CD8-positive, alpha-beta T cell (primary cell): ENCODE measurements at regions of chr2 and their contacts with region 1.

Region 1: DNA sequence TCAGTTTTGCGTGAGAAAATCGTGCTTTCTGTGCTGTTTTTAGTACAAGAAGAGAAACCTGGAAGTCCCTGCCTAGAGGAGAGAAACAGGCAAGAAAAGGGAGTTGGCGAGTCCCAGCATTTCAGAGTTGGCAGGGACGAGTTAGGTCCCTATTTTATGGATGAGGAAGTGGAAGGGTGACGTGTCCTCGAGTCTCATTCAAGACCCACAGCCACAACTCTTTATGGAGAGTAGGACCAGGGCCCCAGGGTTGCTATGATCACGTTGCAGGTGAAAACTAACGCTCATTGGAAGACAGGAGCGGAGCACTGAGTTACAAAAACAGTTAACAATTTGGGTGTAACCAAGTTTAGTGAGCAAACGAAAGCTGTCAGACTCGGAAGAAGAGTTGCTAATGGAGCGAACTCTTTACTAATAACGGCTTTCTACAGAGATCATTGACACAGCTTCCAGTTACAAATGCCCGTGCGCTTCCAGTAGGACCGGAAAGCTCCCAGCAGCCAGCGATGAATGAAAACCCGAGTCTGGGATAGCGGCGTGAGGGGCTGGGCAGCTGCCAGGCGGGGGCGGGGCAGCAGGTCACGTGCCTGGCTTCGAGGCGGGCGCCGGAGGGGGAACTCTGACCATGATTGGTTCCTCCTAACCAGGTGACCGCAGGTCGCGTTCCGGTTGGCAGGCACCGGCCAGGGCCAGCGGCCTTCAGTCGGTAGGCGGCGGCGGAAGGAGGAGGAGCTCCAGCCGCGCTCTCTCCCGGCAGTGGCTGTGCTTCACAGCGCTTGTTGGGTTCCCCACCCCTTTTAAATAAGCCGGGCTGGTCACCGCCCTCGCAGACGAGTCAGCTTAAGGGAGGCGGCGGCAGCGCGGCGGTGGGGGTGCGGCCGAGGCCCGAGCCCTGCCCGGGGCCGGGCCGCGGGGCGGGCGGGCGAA is at the start of gene CCNYL1:
- DNase-seq: peak; percentile 95 to 99 (median 97)
- ATAC-seq: peak; percentile 96
- H3K4me3 ChIP-seq: peak within 1 kb of the TSS; percentile 87 to 97
- H3K4me3 Mint-ChIP-seq: peak within 1 kb of the TSS; percentile 91
- H3K27ac ChIP-seq: peak within 1 kb of the TSS; percentile 69 to 71
- H3K27ac Mint-ChIP-seq: peak within 1 kb of the TSS; percentile 86
- H3K4me1 ChIP-seq: peaks cover 19% of the 10 kb centered on the region
- H3K4me1 Mint-ChIP-seq: peaks cover 22% of the 10 kb centered on the region
- H3K27me3 ChIP-seq: no peaks in the 10 kb centered on the region
- H3K27me3 Mint-ChIP-seq: no peaks in the 10 kb centered on the region
- CTCF ChIP-seq: no peak
- total RNA-seq, gene CCNYL1: 12.0 to 12.3 TPM

Region 2: DNA sequence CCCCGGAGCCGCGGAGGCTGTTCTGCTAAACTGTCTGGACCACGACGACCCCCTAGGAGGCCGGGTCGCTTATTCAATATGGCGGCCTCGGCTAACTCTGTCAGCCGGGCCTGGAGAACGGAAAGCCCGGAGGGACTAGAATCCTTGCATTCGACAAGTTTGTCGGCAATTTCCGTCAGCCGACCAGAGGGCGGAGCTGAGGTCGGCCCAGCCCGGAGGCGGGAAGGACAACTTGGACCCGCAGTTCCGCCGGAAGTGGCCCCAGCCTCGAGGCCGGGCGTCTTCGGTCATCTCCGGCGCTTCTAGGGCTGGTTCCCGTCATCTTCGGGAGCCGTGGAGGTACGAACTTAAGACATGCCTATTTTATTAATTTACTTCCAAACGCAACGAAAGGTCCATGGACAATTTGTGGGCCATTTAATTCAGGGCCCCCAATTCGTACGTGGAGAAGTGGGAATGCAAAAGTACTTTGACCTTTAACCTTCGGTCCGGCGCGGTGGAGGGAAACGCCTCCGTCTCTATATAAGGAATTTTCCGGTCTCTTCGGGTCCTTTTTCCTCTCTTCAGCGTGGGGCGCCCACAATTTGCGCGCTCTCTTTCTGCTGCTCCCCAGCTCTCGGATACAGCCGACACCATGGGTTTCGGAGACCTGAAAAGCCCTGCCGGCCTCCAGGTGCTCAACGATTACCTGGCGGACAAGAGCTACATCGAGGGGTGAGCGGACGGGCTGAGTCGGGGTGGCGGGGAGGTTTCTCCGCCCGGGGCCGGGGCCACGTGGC is 1551.5 kb before region 1 on chr2 and contains the starts of genes EEF1B2 and NDUFS1:
- CTCF ChIA-PET with region 1: no interaction called
- POLR2A ChIA-PET with region 1: no interaction called
- intact Hi-C with region 1: loop called in 1 of 2 experiments (anchors 5 kb)
- DNase-seq: peak; percentile 95 to 99 (median 96)
- ATAC-seq: peak; percentile 85
- H3K4me3 ChIP-seq: peak within 1 kb of the TSS; percentile 73 to 93
- H3K4me3 Mint-ChIP-seq: peak within 1 kb of the TSS; percentile 99
- H3K27ac ChIP-seq: peak within 1 kb of the TSS; percentile 81 to 91
- H3K27ac Mint-ChIP-seq: peak within 1 kb of the TSS; percentile 100
- H3K4me1 ChIP-seq: peaks cover 30% of the 10 kb centered on the region
- H3K4me1 Mint-ChIP-seq: peaks cover 59% of the 10 kb centered on the region
- H3K27me3 ChIP-seq: no peaks in the 10 kb centered on the region
- H3K27me3 Mint-ChIP-seq: no peaks in the 10 kb centered on the region
- CTCF ChIP-seq: no peak
- total RNA-seq, gene EEF1B2: 1,147 to 1,208 TPM
- total RNA-seq, gene NDUFS1: 23.7 to 28.7 TPM

Region 3: GRCh38 chr2:207123335-207123744 is 587.7 kb before region 1 on chr2:
- CTCF ChIA-PET with region 1: no interaction called
- POLR2A ChIA-PET with region 1: no interaction called
- intact Hi-C with region 1: no loop called
- DNase-seq: peak in 6 of 9 experiments; percentile 18 to 62 (median 42)
- ATAC-seq: peak; percentile 89
- H3K4me3 ChIP-seq: no peak overlapping the region
- H3K4me3 Mint-ChIP-seq: no peak overlapping the region
- H3K27ac ChIP-seq: no peak overlapping the region
- H3K27ac Mint-ChIP-seq: peak overlapping the region; percentile 55
- H3K4me1 ChIP-seq: peaks cover 4% of the 10 kb centered on the region
- H3K4me1 Mint-ChIP-seq: peaks cover 54% of the 10 kb centered on the region
- H3K27me3 ChIP-seq: no peaks in the 10 kb centered on the region
- H3K27me3 Mint-ChIP-seq: no peaks in the 10 kb centered on the region
- CTCF ChIP-seq: no peak

Region 4: DNA sequence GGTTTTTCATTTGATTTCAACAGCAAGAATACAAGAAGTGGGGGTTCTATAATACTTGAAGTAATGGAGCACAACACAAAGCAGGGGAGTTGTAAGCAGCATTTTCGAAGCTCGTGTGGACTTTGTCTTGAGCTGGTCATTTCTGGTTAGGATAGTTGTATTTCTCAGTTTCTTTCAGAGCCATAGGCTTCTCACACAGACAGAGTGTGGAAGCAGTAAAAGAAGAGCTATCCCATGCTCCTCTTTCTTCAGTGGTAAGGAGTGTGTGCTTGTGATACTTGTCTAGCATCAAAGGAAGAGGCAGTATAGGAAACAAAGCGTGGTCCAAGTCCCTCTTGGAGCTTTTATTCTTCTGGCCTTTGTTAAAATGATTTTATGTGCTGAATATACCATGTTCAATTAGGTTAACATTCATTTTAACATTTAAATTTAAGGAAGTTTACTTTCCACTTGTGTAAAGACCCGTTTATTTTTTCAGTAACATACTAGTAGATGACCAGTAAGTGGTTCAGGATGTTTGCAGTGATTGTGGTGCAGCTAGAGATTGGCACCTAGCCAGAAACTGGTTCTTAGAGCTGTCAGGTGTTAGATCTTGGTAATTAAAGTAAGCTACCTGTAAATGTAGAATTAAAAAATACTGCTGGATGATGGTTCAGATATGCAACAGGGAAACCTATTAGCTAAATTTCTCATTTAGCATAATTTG is 14.9 kb after region 1 on chr2:
- CTCF ChIA-PET with region 1: interaction called, 9 read pairs
- POLR2A ChIA-PET with region 1: interaction called, 11 read pairs
- intact Hi-C with region 1: no loop called
- DNase-seq: peak in 3 of 9 experiments; percentile 21 to 47 (median 31)
- ATAC-seq: no peak
- H3K4me3 ChIP-seq: no peak overlapping the region
- H3K4me3 Mint-ChIP-seq: no peak overlapping the region
- H3K27ac ChIP-seq: no peak overlapping the region
- H3K27ac Mint-ChIP-seq: no peak overlapping the region
- H3K4me1 ChIP-seq: peaks cover 16% of the 10 kb centered on the region
- H3K4me1 Mint-ChIP-seq: peaks cover 24% of the 10 kb centered on the region
- H3K27me3 ChIP-seq: no peaks in the 10 kb centered on the region
- H3K27me3 Mint-ChIP-seq: no peaks in the 10 kb centered on the region
- CTCF ChIP-seq: no peak

Region 5: DNA sequence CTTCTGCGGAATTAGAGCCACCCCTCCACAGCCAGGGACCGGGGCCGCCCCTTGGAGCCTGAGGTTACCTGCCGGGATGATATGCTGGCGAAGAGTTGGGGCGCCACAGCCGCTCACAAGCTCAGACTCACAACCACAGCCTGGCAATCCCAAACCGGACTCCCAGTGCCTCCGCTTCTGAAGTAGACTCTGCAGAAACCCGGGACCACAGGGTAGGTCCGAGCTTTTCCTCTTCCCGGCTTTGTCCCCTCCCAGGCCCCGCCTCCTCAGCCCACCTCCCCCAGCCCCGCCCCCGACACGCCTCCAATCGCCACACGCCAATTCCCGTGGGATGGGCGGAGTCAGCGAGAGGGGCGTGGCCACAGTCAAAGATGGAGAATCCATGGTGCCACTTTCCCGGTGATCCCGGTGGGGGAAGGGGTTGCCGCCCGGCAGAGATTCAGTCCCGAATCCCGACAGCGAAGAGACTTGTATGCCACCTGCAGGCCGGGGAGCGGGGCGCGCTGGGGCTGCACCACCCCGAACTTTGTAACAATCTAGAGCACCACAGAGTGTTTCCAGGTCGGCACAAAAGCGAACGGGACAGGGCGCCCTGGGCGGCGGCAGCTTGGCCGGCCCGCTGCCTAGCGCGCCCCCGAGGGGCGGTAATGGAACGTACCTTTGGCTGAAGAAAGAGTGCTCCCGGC is 543.9 kb after region 1 on chr2 and contains the start of gene IDH1:
- CTCF ChIA-PET with region 1: no interaction called
- POLR2A ChIA-PET with region 1: no interaction called
- intact Hi-C with region 1: loop called in 1 of 2 experiments (anchors 5 kb)
- DNase-seq: peak; percentile 83 to 97 (median 93)
- ATAC-seq: peak; percentile 85
- H3K4me3 ChIP-seq: peak within 1 kb of the TSS; percentile 99
- H3K4me3 Mint-ChIP-seq: peak within 1 kb of the TSS; percentile 94
- H3K27ac ChIP-seq: peak within 1 kb of the TSS; percentile 31 to 51
- H3K27ac Mint-ChIP-seq: peak within 1 kb of the TSS; percentile 83
- H3K4me1 ChIP-seq: peaks cover 13% of the 10 kb centered on the region
- H3K4me1 Mint-ChIP-seq: peaks cover 31% of the 10 kb centered on the region
- H3K27me3 ChIP-seq: no peaks in the 10 kb centered on the region
- H3K27me3 Mint-ChIP-seq: no peaks in the 10 kb centered on the region
- CTCF ChIP-seq: no peak
- total RNA-seq, gene IDH1: 3.0 to 4.0 TPM